Endothelial cell of umbilical vein (primary cell): ENCODE measurements at regions of chr2 and their contacts with region 1.

Region 1: DNA sequence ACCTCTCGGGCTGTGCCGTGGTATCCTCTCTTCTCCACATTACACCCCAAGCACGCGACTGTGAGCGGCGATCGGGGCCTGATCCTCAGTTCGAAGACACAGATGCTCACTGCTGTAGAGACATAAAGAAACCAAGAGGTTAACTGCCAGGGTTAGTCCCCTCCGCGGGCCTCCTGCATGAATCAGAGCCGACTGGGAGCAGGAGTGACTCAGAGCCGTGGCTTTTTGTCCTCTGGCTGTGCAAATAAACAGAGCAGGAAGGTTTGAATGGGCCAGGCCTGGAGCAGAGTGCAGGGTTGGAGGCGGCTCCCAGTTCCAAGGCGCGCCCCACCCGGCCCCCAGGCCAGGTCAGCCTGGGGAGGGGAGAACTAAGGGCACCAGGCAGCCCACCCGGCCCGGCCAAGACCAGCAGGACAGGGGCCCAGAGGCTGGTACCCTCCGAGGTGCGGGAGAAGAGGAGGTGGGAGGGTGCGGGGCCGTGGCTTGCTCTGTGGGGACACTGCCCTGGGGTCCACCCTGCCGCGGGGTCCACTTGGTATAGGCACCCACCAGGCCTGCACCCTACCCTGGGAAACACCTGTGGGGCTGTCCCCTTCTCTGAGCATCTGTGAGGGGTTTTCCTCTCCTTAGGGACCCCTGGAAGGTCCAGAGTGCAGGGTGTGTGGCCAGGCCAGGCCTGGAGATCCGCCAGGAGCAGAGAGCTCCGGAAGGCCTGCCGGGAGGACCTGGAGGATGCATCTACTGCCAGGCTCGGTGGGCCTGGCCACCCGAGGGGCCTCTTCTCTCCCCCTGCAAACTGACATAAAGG is 16.5 kb downstream of the TWIST2 start:
- DNase-seq: peak; percentile 96
- H3K4me3 ChIP-seq: no peak overlapping the region
- H3K27ac ChIP-seq: peak overlapping the region; percentile 92
- H3K4me1 ChIP-seq: peaks cover 19% of the 10 kb centered on the region
- H3K27me3 ChIP-seq: no peaks in the 10 kb centered on the region
- CTCF ChIP-seq: no peak
- POLR2A ChIP-seq: peak; percentile 49

Region 2: GRCh38 chr2:238042849-238043584 is 821.4 kb before region 1 on chr2:
- CTCF ChIA-PET with region 1: no interaction called
- POLR2A ChIA-PET with region 1: no interaction called
- dilution Hi-C with region 1: no loop called
- intact Hi-C with region 1: no loop called
- DNase-seq: peak; percentile 20
- H3K4me3 ChIP-seq: no peak overlapping the region
- H3K27ac ChIP-seq: no peak overlapping the region
- H3K4me1 ChIP-seq: no peaks in the 10 kb centered on the region
- H3K27me3 ChIP-seq: no peaks in the 10 kb centered on the region
- CTCF ChIP-seq: no peak
- POLR2A ChIP-seq: no peak

Region 3: DNA sequence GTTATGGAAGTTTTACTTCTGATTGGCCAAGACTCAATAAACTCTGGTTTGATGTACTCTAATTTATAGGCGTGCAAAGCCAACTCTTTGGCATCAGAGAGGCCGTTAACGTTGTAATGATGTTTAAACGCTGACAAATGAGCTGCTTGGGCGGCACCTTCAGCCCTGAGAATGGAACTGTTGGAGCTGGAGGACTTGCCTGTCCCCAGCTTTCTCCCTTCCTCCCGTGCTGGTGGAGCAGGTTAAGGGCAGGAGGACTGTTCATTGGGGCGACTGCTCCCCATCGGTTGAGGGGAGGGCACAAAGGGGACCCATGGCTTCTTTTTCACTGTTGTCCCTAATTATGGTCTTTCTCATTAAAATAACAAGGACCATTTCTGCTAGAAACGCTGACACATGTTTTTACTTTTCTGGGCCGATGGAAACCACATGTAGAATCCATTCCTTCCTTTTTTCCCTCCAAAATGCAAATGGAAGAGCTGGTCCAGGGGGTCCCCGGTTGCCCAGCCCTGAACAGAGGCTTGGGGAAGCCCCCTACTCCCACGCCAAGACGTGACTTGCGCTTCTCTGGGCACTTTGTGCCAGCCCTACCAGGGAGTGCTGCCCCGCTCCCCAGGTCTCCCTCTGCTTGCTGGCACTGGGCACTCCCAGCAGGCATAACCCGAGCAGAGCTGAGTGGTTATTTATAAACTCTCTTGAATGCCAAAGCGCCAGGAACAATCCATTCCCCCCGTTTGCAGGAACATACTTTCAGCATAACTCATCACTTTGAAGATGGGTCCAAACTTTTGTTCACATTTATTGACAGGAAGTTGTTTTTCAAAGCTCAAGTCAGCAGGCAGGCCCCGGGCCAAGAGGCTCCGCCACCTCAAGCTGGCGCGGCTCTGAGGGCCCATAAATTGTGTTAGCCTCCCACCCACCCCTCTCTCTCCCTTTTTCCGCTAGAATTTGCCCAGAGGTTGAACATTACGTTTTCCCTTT is 267.6 kb before region 1 on chr2:
- CTCF ChIA-PET with region 1: no interaction called
- POLR2A ChIA-PET with region 1: no interaction called
- dilution Hi-C with region 1: no loop called
- intact Hi-C with region 1: loop called (anchors 5 kb)
- DNase-seq: peak; percentile 93
- H3K4me3 ChIP-seq: no peak overlapping the region
- H3K27ac ChIP-seq: peak overlapping the region; percentile 29
- H3K4me1 ChIP-seq: peaks cover 10% of the 10 kb centered on the region
- H3K27me3 ChIP-seq: no peaks in the 10 kb centered on the region
- CTCF ChIP-seq: no peak
- POLR2A ChIP-seq: no peak

Region 4: GRCh38 chr2:238847841-238848690 is 16.3 kb before region 1 on chr2 and contains the start of gene TWIST2:
- CTCF ChIA-PET with region 1: interaction called, 4 read pairs
- POLR2A ChIA-PET with region 1: no interaction called
- dilution Hi-C with region 1: no loop called
- intact Hi-C with region 1: loop called (anchors 1 kb)
- DNase-seq: peak; percentile 50
- H3K4me3 ChIP-seq: peak within 1 kb of the TSS; percentile 35 to 61 (median 59)
- H3K27ac ChIP-seq: no peak within 1 kb of the TSS
- H3K4me1 ChIP-seq: peaks cover 4% of the 10 kb centered on the region
- H3K27me3 ChIP-seq: peaks cover 14 to 31% of the 10 kb centered on the region in 2 experiments
- CTCF ChIP-seq: no peak
- POLR2A ChIP-seq: no peak
- total RNA-seq, gene TWIST2: 1.2 and 2.3 TPM in 2 replicates

Region 5: DNA sequence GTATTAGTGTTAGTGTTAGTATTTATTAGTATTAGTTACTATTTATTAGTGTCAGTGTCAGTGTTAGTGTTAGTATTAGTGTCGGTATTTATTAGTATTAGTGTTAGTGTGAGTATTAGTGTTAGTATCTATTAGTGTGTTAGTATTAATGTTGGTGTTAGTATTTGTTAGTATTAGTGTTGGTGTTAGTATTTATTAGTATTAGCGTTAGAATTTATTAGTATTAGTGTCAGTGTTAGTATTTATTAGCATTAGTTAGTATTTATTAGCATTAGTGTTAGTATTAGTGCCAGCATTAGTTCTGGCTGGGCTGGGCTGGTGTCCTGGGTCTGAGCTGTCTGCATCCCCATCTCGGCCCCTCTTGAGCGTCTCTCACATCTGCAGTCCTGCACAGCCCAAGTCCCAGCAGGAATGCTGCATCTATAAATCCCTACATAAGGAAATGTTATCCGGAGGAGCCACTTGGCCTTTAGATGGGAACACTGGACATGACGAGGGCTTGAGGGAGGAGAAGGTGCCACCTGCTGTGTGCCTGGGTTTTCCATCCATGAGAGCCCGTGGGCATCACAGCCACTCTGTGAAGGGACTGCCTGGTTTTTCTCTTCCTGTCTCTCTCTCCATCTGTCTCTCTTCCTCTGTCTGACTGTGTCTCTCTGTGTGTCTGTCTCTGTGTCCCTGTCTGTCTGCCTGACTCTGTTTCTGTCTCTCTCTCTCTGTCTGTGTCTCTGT is 17.1 kb after region 1 on chr2:
- CTCF ChIA-PET with region 1: no interaction called
- POLR2A ChIA-PET with region 1: no interaction called
- dilution Hi-C with region 1: no loop called
- intact Hi-C with region 1: no loop called
- DNase-seq: no peak
- H3K4me3 ChIP-seq: no peak overlapping the region
- H3K27ac ChIP-seq: no peak overlapping the region
- H3K4me1 ChIP-seq: no peaks in the 10 kb centered on the region
- H3K27me3 ChIP-seq: no peaks in the 10 kb centered on the region
- CTCF ChIP-seq: no peak
- POLR2A ChIP-seq: no peak

Region 6: DNA sequence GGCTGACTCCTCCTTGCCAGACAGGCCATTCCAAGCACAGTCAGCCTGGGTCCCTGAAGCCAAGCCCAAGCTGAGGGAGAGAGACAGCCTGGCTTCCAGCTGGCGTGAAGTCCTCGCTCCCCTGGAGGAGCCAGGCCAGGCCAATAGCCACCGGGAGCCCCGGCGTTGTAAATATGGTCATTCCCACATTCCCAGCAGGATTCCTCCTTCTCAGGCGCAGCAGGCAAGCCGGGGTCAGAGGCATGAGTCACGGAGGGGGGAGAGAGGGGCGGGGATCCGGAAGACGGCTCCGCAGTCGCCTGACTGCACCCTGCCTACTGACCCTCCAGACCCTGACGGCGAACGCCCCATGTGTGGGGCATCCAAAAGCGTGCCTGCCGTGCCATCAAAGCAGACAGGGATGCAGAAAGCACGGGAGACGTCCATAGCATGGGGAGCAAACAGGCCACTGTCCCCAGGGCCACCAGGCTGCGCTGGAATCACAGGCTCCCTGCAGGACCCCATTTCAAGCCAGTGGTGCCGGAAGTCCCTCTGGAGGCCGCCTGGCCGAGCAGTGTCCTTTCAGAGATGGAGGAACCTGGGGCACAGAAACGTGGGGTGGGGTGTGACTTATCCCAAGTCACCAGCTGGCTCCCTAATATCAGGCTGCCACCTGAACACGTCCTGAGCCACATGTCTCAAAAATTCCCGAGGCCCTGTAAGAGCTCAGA is 31.6 kb after region 1 on chr2:
- CTCF ChIA-PET with region 1: no interaction called
- POLR2A ChIA-PET with region 1: no interaction called
- dilution Hi-C with region 1: no loop called
- intact Hi-C with region 1: loop called (anchors 1 kb)
- DNase-seq: peak; percentile 81
- H3K4me3 ChIP-seq: no peak overlapping the region
- H3K27ac ChIP-seq: peak overlapping the region; percentile 30
- H3K4me1 ChIP-seq: peaks cover 12% of the 10 kb centered on the region
- H3K27me3 ChIP-seq: no peaks in the 10 kb centered on the region
- CTCF ChIP-seq: no peak
- POLR2A ChIP-seq: no peak

Region 7: DNA sequence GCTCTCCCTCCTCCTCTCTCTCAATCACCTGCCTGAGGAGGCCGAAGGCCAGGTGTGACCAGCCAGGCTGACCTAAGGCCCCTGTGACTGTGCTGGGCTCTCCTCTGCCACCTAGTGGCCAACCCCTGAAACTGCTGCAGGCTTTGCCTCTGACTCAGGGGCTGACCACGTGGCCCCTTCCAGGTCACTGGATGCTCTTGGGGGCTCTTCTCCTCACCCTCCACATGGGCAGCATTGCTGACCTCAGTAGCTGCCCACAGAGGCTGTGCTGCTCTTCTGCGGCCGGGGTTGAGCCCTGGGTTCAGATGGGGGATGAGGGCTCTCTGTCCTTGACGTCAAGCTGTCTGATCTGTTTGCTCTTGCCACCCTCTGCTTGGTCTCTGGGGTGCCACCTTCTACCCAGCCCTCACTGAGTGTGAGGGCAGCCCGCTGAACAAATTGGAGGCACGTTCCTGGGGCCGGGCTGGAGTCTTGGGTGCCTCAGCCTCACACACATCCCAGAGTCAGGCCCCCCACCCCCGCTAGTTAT is 106.2 kb after region 1 on chr2:
- CTCF ChIA-PET with region 1: no interaction called
- POLR2A ChIA-PET with region 1: no interaction called
- dilution Hi-C with region 1: no loop called
- intact Hi-C with region 1: loop called (anchors 5 kb)
- DNase-seq: peak; percentile 66
- H3K4me3 ChIP-seq: no peak overlapping the region
- H3K27ac ChIP-seq: no peak overlapping the region
- H3K4me1 ChIP-seq: peaks cover 20% of the 10 kb centered on the region
- H3K27me3 ChIP-seq: no peaks in the 10 kb centered on the region
- CTCF ChIP-seq: peak; percentile 96 to 99
- POLR2A ChIP-seq: no peak